ENCODE measurements at regions of chr14 and their contacts with region 1.

Region 1: GRCh38 chr14:36941783-36942521 is 230.5 kb downstream of the SLC25A21 start:
- DNase-seq: peak; percentile 46 to 76 (median 53)
- ATAC-seq: peak; percentile 95
- H3K4me3 ChIP-seq: no peak overlapping the region
- H3K27ac ChIP-seq: no peak overlapping the region
- H3K4me1 ChIP-seq: no peaks in the 10 kb centered on the region
- H3K27me3 ChIP-seq: no peaks in the 10 kb centered on the region
- CTCF ChIP-seq: peak; percentile 79 to 86 (median 80)
- EP300 ChIP-seq: no peak
- POLR2A ChIP-seq: no peak
- RAD21 ChIP-seq: peak; percentile 67 to 78

Region 2: GRCh38 chr14:36773136-36773540 is 168.8 kb before region 1 on chr14:
- CTCF ChIA-PET with region 1: interaction called, 4 read pairs
- POLR2A ChIA-PET with region 1: no interaction called
- in situ Hi-C with region 1: no loop called
- intact Hi-C with region 1: loop called (anchors 5 kb)
- DNase-seq: peak; percentile 59 to 81 (median 73)
- ATAC-seq: peak; percentile 92
- H3K4me3 ChIP-seq: no peak overlapping the region
- H3K27ac ChIP-seq: no peak overlapping the region
- H3K4me1 ChIP-seq: peaks cover 0 to 15% of the 10 kb centered on the region in 2 experiments; a peak in 4 of 5 replicates
- H3K27me3 ChIP-seq: no peaks in the 10 kb centered on the region
- CTCF ChIP-seq: peak; percentile 36 to 54 (median 42); a peak in 4 of 6 replicates
- EP300 ChIP-seq: peak; percentile 63; the same call in 1 of the 2 replicates
- POLR2A ChIP-seq: no peak
- RAD21 ChIP-seq: peak; percentile 28 to 46

Region 3: DNA sequence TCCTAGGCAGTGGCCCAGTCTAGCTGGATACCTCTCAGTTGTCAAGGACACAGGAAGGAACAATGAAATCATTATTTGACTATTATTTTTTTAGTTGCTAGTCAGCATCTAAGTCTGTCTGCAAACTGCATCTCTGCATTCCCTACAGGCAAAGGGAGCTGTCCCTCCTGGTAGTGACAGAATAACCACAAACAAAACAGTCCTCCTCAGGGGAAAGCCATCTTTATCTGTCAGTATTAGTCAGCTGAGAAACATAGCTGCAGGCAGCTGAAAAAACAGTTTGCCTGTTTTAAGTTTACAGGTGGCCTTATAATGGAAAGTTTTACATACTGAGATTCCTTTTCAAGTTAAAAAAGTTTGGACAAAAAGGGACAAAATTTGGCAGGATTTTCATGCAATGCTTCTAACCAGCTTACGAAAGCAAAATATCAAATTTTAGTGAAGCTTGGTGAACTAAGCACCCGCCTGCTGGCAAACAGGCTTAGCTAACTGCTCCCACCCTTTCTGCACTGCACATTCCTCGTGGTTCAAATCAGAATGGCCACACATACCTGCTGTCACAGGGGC is 201.0 kb after region 1 on chr14:
- CTCF ChIA-PET with region 1: no interaction called
- POLR2A ChIA-PET with region 1: interaction called, 3 read pairs
- in situ Hi-C with region 1: no loop called
- intact Hi-C with region 1: loop called (anchors 10 kb)
- DNase-seq: no peak
- ATAC-seq: peak; percentile 52
- H3K4me3 ChIP-seq: no peak overlapping the region
- H3K27ac ChIP-seq: no peak overlapping the region
- H3K4me1 ChIP-seq: peaks cover 0 to 5% of the 10 kb centered on the region in 2 experiments; a peak in 3 of 5 replicates
- H3K27me3 ChIP-seq: no peaks in the 10 kb centered on the region
- CTCF ChIP-seq: no peak
- EP300 ChIP-seq: no peak
- POLR2A ChIP-seq: no peak
- RAD21 ChIP-seq: no peak